CD4-positive, alpha-beta memory T cell (primary cell): ENCODE measurements at regions of chr2 and their contacts with region 1.

Region 1: DNA sequence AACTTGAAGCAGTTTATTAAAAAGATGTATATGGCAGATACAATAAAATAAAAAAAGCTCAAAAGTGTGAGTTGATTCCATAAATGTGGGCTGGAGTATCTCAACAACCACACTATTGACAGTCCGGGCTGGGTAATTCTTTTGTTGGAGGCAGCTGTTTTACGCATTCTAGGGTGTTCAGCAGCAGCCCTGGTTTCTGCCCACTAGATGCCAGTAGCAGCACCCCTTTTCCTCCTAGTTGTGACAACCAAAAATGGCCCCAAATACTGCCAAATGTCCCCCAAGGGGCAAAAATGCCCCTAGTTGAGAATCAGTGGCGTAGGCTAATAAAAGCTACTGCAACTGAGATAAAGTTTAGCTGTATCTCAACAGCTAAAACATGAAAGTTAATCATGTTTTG is 44.8 kb downstream of the CHMP3 start:
- DNase-seq: peak; percentile 36 to 43 (median 42)
- H3K4me3 ChIP-seq: no peak overlapping the region
- H3K4me3 Mint-ChIP-seq: no peak overlapping the region
- H3K27ac ChIP-seq: no peak overlapping the region
- H3K27ac Mint-ChIP-seq: peak overlapping the region in 1 of 7 donors; percentile 18
- H3K4me1 ChIP-seq: no peaks in the 10 kb centered on the region
- H3K4me1 Mint-ChIP-seq: peaks cover 0 to 11% (median 3%) of the 10 kb centered on the region in 4 donors
- H3K27me3 ChIP-seq: no peaks in the 10 kb centered on the region
- H3K27me3 Mint-ChIP-seq: no peaks in the 10 kb centered on the region

Region 2: DNA sequence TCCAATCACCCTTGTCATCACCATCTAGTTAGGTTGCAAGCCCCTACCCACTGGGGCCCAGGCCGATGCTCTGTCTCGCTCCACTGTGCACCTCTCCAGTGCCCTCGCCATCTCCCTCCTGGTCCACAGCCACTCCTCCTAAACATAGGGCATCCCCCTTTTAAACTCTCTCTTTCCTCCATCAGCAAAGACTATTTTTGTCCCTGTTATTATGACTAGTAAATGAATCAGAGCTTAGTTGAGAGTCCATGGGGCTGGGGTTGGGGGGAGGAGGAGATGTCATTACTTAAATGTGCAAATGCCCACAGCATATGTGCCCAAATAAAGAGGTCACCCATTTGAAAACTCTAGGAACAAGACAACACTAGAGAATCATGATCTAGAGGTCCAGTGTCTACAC is 1805.0 kb before region 1 on chr2:
- CTCF ChIA-PET with region 1: no interaction called
- POLR2A ChIA-PET with region 1: no interaction called
- intact Hi-C with region 1: no loop called
- DNase-seq: no peak
- H3K4me3 ChIP-seq: no peak overlapping the region
- H3K4me3 Mint-ChIP-seq: no peak overlapping the region
- H3K27ac ChIP-seq: no peak overlapping the region
- H3K27ac Mint-ChIP-seq: peak overlapping the region in 1 of 7 donors; percentile 65
- H3K4me1 ChIP-seq: peaks cover 14% of the 10 kb centered on the region
- H3K4me1 Mint-ChIP-seq: peaks cover 12 to 22% (median 18%) of the 10 kb centered on the region in 4 donors
- H3K27me3 ChIP-seq: no peaks in the 10 kb centered on the region
- H3K27me3 Mint-ChIP-seq: no peaks in the 10 kb centered on the region

Region 3: GRCh38 chr2:86675511-86676015 is 157.1 kb after region 1 on chr2:
- CTCF ChIA-PET with region 1: interaction called, 44 read pairs
- POLR2A ChIA-PET with region 1: no interaction called
- intact Hi-C with region 1: loop called (anchors 1 kb)
- DNase-seq: peak in 4 of 5 donors; percentile 7 to 17 (median 11)
- H3K4me3 ChIP-seq: no peak overlapping the region
- H3K4me3 Mint-ChIP-seq: peak overlapping the region in 1 of 8 donors; percentile 49
- H3K27ac ChIP-seq: no peak overlapping the region
- H3K27ac Mint-ChIP-seq: peak overlapping the region in 1 of 7 donors; percentile 36
- H3K4me1 ChIP-seq: no peaks in the 10 kb centered on the region
- H3K4me1 Mint-ChIP-seq: no peaks in the 10 kb centered on the region
- H3K27me3 ChIP-seq: no peaks in the 10 kb centered on the region
- H3K27me3 Mint-ChIP-seq: no peaks in the 10 kb centered on the region